ENCODE measurements at regions of chr5 and their contacts with region 1.

Region 1: DNA sequence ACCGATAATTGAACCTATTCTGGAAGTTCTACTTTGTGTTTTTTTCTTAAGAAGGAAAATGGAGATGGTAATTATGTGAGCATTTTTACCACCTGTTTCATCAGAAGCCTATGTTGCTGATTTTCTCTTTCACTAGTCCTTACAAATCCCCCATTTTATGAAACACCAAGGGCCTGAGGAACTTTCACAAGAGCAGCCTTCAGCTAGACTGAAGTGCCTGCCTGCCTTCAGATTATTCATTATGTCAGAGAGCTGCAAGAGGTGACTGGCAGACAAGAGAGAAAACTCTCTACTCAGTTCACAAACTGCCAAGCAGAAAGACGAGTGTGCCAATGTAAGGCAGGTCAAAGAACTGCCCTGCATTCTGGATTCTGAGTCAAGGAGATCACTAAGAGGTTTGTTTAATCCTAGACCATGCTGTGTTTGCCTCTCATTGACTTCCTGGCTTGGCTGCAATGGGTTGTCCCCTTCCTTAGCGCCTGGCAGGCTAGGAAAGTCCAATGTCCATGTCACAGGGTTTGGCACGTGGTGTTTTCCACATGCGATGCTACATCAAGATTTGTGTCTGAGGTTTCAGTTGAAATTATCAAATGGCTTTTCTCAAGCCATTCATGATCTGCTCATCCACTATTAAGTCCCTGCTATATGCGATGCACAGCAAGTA is 143.3 kb downstream of the CDC42SE2 start:
- DNase-seq: peak in 2 of 6 donors; percentile 20 to 40
- ATAC-seq: peak; percentile 70 to 83 (median 76)
- H3K4me3 ChIP-seq: no peak overlapping the region
- H3K27ac ChIP-seq: no peak overlapping the region
- H3K4me1 ChIP-seq: peaks cover 0 to 5% (median 0%) of the 10 kb centered on the region in 3 donors
- H3K27me3 ChIP-seq: no peaks in the 10 kb centered on the region
- CTCF ChIP-seq: no peak

Region 2: DNA sequence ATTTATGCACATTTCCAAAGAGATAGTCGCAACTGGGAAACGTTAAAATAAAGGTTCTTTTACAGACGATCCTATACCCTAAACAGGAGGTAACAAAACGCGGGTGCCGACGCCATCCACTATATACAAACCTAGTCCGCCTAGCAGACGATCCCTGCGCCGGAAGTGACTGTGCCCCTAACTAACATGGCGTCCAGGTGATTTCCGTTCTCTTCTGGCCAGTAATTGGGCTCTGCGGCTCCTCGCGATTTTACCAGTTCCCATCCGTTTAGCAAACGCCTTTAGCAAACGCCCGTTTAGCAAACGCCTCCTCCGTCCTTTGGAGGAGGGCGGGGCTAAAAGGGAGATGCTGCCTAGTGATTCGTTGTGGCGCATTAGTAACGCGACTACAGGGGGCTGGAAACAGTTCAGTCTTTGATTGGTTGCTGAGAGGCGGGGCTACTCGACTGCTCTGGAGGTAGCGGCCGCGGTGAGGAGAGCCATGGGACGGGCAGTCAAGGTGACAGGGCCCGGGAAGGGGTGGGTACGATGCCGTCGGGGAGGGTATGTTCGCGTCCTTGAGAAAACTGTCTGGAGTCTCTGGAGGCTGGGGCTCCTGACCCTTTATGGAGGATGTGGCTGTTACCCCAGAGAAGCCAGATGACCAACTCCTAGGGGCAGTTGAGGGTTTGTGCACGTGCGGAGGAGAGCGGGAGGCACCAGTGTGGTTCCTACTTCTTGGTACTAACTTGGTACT is 236.4 kb before region 1 on chr5 and contains the start of gene LYRM7:
- intact Hi-C with region 1: loop called in 1 of 3 experiments (anchors 10 kb)
- DNase-seq: peak; percentile 84 to 98 (median 96)
- ATAC-seq: peak; percentile 97 to 99 (median 98)
- H3K4me3 ChIP-seq: peak within 1 kb of the TSS; percentile 40 to 61 (median 45)
- H3K27ac ChIP-seq: peak within 1 kb of the TSS; percentile 29 to 82 (median 62)
- H3K4me1 ChIP-seq: peaks cover 3 to 9% (median 6%) of the 10 kb centered on the region in 3 donors
- H3K27me3 ChIP-seq: no peaks in the 10 kb centered on the region
- CTCF ChIP-seq: no peak
- total RNA-seq, gene LYRM7: 2.3 to 4.8 (median 3.0) TPM

Region 3: DNA sequence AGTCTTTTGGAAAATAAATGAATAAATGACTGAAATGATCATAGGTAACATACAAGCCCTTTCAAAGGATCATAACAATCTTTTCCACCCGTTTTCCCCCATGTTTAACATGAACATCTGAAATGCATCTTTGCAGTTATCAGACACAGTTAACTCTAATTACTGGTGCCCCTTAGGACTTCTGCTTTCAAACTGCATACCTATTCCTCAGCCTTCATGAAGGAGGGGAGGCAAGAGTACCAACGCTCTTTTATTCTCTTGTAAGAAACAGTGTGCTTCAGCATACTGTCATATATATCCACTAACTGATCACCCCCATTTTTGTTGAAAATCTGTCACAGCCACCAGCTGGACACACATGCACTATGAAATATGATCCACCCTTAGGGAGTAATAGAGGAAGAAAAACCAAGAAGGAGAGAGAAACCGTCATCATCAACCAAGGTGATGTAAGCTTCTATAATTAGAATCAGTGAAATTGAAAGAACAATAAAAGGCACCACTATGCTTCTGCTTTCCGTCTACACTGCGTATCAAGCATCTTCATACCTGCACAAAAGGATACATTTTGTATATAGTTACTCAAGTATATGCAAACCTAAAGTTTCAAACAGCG is 129.2 kb after region 1 on chr5:
- intact Hi-C with region 1: no loop called
- DNase-seq: no peak
- ATAC-seq: peak in 3 of 4 donors; percentile 19 to 58 (median 52)
- H3K4me3 ChIP-seq: no peak overlapping the region
- H3K27ac ChIP-seq: no peak overlapping the region
- H3K4me1 ChIP-seq: peaks cover 0 to 2% (median 0%) of the 10 kb centered on the region in 3 donors
- H3K27me3 ChIP-seq: no peaks in the 10 kb centered on the region
- CTCF ChIP-seq: no peak